ENCODE measurements at regions of chr3 and their contacts with region 1.

Region 1: GRCh38 chr3:111967651-111968274 is 11.1 kb upstream of the ABHD10 start:
- DNase-seq: peak; percentile 89

Region 2: DNA sequence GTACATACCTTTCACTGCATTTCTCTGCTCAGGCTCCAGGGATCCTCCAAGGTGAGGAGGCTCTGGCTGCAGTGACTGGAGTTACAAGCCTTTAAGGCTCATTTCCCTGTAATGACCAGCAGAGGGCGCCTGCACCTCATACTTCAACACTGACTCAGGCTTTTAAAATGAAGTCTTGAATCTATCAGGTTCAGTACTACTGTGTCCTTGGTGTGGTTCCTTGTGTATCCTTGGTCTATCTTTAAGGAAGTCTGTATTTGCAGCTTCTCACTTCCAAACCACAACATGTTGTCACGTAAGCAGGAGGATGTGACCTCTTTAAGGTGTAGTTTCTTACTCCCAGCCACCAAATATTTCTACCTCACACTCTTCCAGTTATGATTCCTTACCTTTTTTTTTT is 250.2 kb before region 1 on chr3:
- in situ Hi-C with region 1: loop called (anchors 25 kb)
- DNase-seq: peak; percentile 91

Region 3: GRCh38 chr3:112175646-112176045 is 207.9 kb after region 1 on chr3:
- in situ Hi-C with region 1: no loop called
- DNase-seq: no peak

Region 4: GRCh38 chr3:112635671-112636070 is 667.9 kb after region 1 on chr3:
- in situ Hi-C with region 1: no loop called
- DNase-seq: peak; percentile 4